K562 (cell line): ENCODE measurements at regions of chrX and their contacts with region 1.

Region 1: DNA sequence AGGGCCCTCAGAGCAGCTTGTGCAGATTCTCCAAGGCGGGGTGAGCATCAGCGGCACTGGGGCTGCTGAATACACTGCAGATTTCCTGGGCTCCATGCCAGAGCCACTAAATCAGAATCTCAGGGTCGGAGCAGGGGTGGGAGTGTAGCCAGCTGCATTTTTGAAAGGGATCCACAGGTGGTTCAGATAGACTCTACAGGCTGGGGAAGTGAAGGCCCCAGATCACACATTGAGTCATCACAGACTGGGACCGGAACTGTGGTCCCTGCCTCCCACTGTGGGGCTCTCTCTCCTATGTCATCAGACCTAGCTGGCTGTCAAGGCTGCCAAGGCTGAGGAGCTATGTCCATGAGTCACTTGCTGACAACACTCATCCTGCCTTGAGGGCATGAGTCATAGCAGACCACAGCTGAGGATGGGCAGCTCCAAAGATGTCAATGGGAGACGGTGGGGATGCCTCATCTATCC is 162.3 kb upstream of the MAMLD1 start:
- DNase-seq: peak; percentile 11 to 44 (median 18)
- ATAC-seq: peak; percentile 38; the same call in 2 of the 3 replicates
- H3K4me3 ChIP-seq: no peak overlapping the region
- H3K27ac ChIP-seq: no peak overlapping the region
- H3K4me1 ChIP-seq: no peaks in the 10 kb centered on the region
- H3K27me3 ChIP-seq: no peaks in the 10 kb centered on the region; a peak in 2 of 5 replicates
- CTCF ChIP-seq: no peak
- EP300 ChIP-seq: no peak
- POLR2A ChIP-seq: no peak
- RAD21 ChIP-seq: no peak

Region 2: DNA sequence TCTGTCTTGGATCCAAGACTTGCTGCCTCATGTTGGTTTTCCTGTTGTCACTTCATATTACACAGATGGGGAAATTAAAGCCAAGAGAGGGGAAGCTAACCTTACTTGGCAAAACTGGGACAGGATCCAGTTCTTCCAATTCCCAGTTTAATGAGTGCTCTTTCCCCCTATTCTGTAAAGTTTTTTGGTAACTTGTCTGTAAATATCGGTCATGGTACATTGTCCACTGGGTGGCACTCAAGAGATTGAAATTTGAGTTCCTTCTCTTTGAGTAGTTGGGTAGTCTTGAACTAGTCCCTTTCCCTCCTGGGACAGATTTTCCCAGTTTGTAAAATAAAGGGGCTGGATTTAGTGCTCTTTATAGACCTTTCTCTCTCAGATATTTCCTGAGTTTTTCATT is 250.2 kb before region 1 on chrX:
- CTCF ChIA-PET with region 1: no interaction called
- POLR2A ChIA-PET with region 1: no interaction called
- in situ Hi-C with region 1: no loop called
- intact Hi-C with region 1: loop called (anchors 10 kb)
- DNase-seq: peak; percentile 12 to 48 (median 24)
- ATAC-seq: peak; percentile 69; the same call in 2 of the 3 replicates
- H3K4me3 ChIP-seq: no peak overlapping the region
- H3K27ac ChIP-seq: no peak overlapping the region
- H3K4me1 ChIP-seq: no peaks in the 10 kb centered on the region
- H3K27me3 ChIP-seq: no peaks in the 10 kb centered on the region
- CTCF ChIP-seq: peak; percentile 31 to 61 (median 45); a peak in 5 of 6 replicates
- EP300 ChIP-seq: no peak
- POLR2A ChIP-seq: no peak
- RAD21 ChIP-seq: peak; percentile 24 to 53; a peak in 3 of 4 replicates

Region 3: DNA sequence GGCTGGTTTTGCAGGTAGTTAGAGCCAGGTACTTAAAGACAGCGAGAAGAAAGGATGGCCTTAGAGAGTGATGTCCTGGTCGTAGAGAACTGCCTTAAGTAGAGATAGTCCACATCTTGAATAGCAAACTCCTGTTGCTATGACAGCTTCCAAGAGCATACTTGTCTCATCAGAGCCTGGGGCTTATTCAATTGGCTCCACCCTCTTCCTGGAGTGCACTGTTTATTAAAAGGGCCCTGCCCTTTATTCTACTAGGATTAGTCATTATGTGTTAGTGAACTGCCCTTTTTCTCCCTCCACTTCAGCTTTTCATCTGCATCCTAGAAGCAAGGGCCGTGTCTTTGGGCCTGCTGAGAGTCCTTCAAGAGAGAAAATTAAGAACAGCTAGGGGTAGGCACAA is 168.1 kb before region 1 on chrX:
- CTCF ChIA-PET with region 1: no interaction called
- POLR2A ChIA-PET with region 1: no interaction called
- in situ Hi-C with region 1: no loop called
- intact Hi-C with region 1: loop called (anchors 10 kb)
- DNase-seq: no peak
- ATAC-seq: no peak
- H3K4me3 ChIP-seq: no peak overlapping the region
- H3K27ac ChIP-seq: no peak overlapping the region
- H3K4me1 ChIP-seq: no peaks in the 10 kb centered on the region
- H3K27me3 ChIP-seq: no peaks in the 10 kb centered on the region; a peak in 1 of 5 replicates
- CTCF ChIP-seq: no peak
- EP300 ChIP-seq: no peak
- POLR2A ChIP-seq: no peak
- RAD21 ChIP-seq: no peak

Region 4: GRCh38 chrX:150269605-150270254 is 68.9 kb after region 1 on chrX:
- CTCF ChIA-PET with region 1: no interaction called
- POLR2A ChIA-PET with region 1: no interaction called
- in situ Hi-C with region 1: no loop called
- intact Hi-C with region 1: no loop called
- DNase-seq: no peak
- ATAC-seq: no peak
- H3K4me3 ChIP-seq: no peak overlapping the region
- H3K27ac ChIP-seq: no peak overlapping the region
- H3K4me1 ChIP-seq: no peaks in the 10 kb centered on the region
- H3K27me3 ChIP-seq: peaks cover 0 to 6% of the 10 kb centered on the region in 2 experiments; a peak in 1 of 5 replicates
- CTCF ChIP-seq: no peak
- EP300 ChIP-seq: no peak
- POLR2A ChIP-seq: no peak
- RAD21 ChIP-seq: no peak

Region 5: GRCh38 chrX:150863191-150863590 is 662.3 kb after region 1 on chrX:
- CTCF ChIA-PET with region 1: no interaction called
- POLR2A ChIA-PET with region 1: no interaction called
- in situ Hi-C with region 1: no loop called
- intact Hi-C with region 1: no loop called
- DNase-seq: no peak
- ATAC-seq: no peak
- H3K4me3 ChIP-seq: no peak overlapping the region
- H3K27ac ChIP-seq: no peak overlapping the region
- H3K4me1 ChIP-seq: no peaks in the 10 kb centered on the region; a peak in 1 of 5 replicates
- H3K27me3 ChIP-seq: no peaks in the 10 kb centered on the region
- CTCF ChIP-seq: no peak
- EP300 ChIP-seq: no peak
- POLR2A ChIP-seq: no peak
- RAD21 ChIP-seq: no peak